ENCODE measurements at regions of chr3 and their contacts with region 1.

Region 1: DNA sequence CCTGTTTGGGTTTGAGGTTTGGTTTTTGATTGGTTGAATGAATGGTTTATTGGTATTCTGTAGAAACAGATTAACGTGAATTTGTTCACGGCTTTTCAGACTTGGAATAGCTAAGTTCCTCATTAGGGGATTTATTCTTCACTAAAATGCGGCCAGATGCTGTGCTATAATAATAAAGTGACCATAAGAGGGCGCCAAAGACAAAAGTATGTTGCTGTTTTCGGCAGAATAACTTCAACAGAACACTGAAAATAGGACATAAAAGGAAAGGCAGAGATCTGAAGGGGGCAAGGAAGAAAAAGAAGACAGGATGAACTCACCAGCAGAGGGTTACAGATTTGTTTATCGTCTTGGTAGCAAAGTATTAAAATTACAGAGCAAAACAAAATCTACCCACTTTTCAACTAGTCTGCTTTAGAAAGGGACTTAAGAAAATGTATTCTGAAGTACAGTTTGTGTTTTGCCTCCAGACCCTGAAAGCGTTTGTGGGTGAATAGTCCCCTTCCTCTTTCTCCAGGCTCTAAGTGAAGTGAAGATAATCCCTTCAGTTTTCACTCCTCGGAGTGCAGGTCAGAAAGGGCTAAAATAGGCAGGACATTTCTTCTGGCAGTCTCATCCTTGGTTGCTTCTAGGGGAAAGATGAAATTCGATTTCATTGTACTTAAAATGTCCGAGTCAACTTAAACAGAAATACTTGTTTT is 147.6 kb downstream of the IL20RB start:
- DNase-seq: peak; percentile 21 to 50
- H3K4me3 ChIP-seq: no peak overlapping the region
- H3K27ac ChIP-seq: no peak overlapping the region
- H3K4me1 ChIP-seq: no peaks in the 10 kb centered on the region
- H3K27me3 ChIP-seq: peaks cover 52% of the 10 kb centered on the region; the same call in 1 of the 2 replicates
- CTCF ChIP-seq: peak; percentile 83

Region 2: DNA sequence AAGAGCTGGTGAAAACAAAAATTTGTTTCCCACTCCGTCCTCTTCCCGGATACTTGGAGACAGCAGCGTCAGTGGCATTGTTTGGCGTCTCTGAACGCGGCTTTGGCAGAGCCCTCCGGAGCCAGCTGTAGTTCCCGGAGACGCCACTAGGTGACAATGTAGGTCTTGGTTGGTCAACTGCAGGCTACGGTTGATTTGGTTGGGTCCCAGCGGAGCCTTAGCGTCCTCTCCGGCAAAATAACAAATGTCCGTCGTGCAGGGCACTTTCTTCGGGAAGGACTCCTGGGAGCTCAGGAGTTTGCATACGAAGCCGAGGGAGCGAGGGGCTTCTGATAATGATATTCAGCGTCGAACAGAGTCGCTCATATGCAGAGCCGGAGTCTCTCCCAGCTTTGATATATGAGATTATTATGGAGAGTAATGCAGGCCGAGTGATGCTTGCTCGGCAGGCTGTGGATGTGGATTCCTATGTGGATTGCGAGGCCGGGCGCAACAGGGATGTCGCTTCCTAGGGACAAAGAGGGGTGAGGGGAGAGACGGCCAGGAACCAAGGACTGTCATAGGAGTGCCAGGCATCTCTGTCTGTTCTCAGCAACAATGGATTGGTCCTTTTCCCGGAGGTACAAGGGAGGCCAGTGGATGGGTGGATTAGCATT is 72.8 kb before region 1 on chr3:
- CTCF ChIA-PET with region 1: no interaction called
- POLR2A ChIA-PET with region 1: no interaction called
- intact Hi-C with region 1: loop called (anchors 5 kb)
- DNase-seq: peak in 1 of 2 experiments; percentile 80
- H3K4me3 ChIP-seq: no peak overlapping the region
- H3K27ac ChIP-seq: no peak overlapping the region
- H3K4me1 ChIP-seq: no peaks in the 10 kb centered on the region
- H3K27me3 ChIP-seq: no peaks in the 10 kb centered on the region
- CTCF ChIP-seq: peak; percentile 93

Region 3: GRCh38 chr3:137084586-137084985 is 20.8 kb before region 1 on chr3:
- CTCF ChIA-PET with region 1: no interaction called
- POLR2A ChIA-PET with region 1: no interaction called
- intact Hi-C with region 1: no loop called
- DNase-seq: no peak
- H3K4me3 ChIP-seq: no peak overlapping the region
- H3K27ac ChIP-seq: no peak overlapping the region
- H3K4me1 ChIP-seq: no peaks in the 10 kb centered on the region
- H3K27me3 ChIP-seq: peaks cover 20% of the 10 kb centered on the region; the same call in 1 of the 2 replicates
- CTCF ChIP-seq: no peak

Region 4: GRCh38 chr3:137692803-137693431 is 587.5 kb after region 1 on chr3:
- CTCF ChIA-PET with region 1: no interaction called
- POLR2A ChIA-PET with region 1: no interaction called
- intact Hi-C with region 1: loop called (anchors 5 kb)
- DNase-seq: peak in 1 of 2 experiments; percentile 19
- H3K4me3 ChIP-seq: no peak overlapping the region
- H3K27ac ChIP-seq: no peak overlapping the region
- H3K4me1 ChIP-seq: no peaks in the 10 kb centered on the region
- H3K27me3 ChIP-seq: no peaks in the 10 kb centered on the region; the same call in none of the 2 replicates
- CTCF ChIP-seq: peak; percentile 61

Region 5: DNA sequence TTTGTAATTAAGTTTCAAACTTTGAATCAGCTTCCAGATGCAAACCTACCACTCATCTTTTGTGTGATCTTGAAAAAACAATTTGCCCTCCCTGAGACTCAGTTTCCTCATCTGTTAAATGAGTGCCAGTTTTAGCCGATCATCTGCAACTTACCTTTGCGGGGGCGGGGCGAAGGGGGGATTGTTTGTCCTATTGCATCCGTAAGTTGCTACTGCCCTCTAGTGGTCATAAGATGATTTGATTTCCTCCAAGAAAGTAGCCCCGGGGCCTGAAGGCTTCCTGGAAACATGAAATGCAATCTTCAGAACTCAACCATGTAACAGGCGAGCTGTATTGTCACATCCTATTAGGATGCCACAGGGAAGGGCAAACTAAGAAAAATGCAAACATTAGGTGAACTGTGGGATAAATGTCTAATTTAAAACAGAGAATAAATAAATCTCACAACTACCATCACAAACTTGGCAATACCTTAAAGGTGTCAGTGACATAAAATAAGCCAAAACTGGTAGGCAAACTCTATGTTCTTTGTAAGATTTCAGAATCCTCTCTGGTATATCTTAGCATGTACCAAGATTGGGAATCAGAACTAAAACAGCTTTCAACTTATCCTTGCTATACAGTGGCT is 841.0 kb after region 1 on chr3:
- CTCF ChIA-PET with region 1: no interaction called
- POLR2A ChIA-PET with region 1: no interaction called
- intact Hi-C with region 1: loop called (anchors 1 kb)
- DNase-seq: peak; percentile 48 to 58
- H3K4me3 ChIP-seq: no peak overlapping the region
- H3K27ac ChIP-seq: no peak overlapping the region
- H3K4me1 ChIP-seq: no peaks in the 10 kb centered on the region
- H3K27me3 ChIP-seq: 0 out of 2 replicates have a peak, but pooled peaks cover 9% of the 10 kb centered on the region
- CTCF ChIP-seq: peak; percentile 88

Region 6: GRCh38 chr3:137970914-137971831 is 865.7 kb after region 1 on chr3:
- CTCF ChIA-PET with region 1: no interaction called
- POLR2A ChIA-PET with region 1: no interaction called
- intact Hi-C with region 1: loop called (anchors 2 kb)
- DNase-seq: peak; percentile 47 to 72
- H3K4me3 ChIP-seq: no peak overlapping the region
- H3K27ac ChIP-seq: no peak overlapping the region
- H3K4me1 ChIP-seq: no peaks in the 10 kb centered on the region
- H3K27me3 ChIP-seq: peaks cover 15% of the 10 kb centered on the region; the same call in 1 of the 2 replicates
- CTCF ChIP-seq: peak; percentile 86

Region 7: DNA sequence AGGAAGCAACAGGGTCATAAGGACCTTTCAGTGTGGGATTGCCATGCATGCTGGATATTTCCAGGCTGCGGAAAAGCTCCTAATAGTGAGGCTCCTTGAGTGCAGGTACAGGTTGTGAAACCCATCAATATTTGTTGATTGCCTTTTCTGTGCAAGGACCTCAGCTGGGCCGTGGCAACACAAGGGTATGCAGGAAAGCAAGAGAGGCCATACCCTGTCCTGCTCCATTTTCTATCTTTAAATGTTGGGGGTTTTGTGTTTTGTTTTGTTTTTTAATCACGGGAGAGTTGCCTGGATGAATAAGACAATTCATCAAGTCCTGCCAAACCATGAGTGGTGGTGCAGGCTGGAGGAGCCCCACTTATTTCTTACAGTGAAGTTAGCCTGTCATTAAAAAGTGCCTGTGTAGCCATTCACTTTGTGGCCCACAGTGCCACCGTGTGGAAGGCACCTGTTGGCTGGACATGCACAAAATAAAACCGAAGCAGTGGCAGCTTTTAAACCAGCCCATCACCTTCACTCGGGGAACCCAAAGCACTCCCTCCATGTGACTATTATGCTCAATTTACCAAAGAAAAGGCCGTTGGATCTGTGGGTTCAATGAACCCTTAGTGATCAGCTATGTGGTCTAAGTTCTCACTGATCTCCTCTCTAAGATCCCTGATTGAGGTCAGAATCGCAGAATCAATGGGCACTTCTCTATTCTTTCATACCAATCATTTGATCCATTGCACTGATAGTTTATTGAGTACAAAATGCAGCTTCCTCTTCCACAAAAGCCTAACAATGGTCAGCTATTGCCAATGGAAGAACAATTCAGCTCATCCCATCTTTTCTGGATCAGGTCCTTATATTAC is 946.7 kb after region 1 on chr3:
- CTCF ChIA-PET with region 1: no interaction called
- POLR2A ChIA-PET with region 1: no interaction called
- intact Hi-C with region 1: loop called (anchors 1 kb)
- DNase-seq: peak in 1 of 2 experiments; percentile 50
- H3K4me3 ChIP-seq: no peak overlapping the region
- H3K27ac ChIP-seq: no peak overlapping the region
- H3K4me1 ChIP-seq: no peaks in the 10 kb centered on the region
- H3K27me3 ChIP-seq: no peaks in the 10 kb centered on the region
- CTCF ChIP-seq: peak; percentile 77